Activated CD4-positive, alpha-beta memory T cell treated with anti-CD3 and anti-CD28 coated beads, Interleukin-2, amount 10 ng/mL, durations not matched to agents 7 days and 5 days (primary cell): ENCODE measurements at regions of chr22 and their contacts with region 1.

Region 1: DNA sequence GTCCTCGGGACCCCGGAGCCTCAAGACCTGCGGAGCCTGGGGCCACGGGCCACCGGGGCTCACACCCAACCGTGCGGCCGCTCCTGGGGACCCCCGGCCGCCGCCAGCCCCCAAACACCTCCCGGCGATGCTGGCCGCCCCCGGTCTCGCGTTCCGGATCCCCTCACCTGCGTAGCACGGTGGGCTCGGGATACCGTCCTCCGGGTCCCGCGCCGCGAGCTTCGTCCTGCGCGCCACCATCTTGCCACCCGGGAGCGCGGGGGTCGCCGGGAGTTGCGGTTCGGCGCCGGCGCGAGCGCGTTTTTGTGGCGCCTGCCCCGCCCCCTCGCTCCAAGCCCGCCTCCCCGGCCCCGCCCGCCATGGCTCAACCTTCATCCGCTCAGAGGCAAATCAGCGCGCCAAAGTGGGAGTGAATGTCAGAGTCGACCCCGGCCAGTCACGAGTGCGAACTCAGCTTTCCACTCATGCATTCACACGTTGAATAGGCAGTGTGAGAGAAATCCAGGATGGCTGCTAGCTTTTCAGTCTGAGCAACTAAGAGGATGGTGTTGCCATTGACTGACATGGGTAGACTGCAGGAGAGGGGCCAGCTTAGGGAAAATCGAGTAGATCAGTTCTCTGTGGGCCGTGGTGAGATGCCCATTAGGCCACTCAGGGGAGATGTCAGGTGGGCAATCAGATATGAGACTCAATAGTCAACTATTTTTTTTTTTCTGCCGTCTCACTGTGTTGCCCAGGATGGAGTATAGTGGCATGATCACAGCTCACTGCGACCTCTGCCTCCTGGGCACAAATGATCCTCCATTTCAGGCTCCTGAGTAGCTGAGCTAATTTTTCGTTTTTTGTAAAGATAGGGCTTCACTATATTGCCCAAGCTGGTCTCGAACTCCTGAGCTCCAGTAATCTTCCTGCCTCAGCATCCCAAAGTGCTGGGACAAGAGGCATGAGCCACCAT is 28.3 kb downstream of the SERHL2 start:
- DNase-seq: peak; percentile 88
- H3K4me3 Mint-ChIP-seq: peak overlapping the region; percentile 96
- H3K27ac Mint-ChIP-seq: peak overlapping the region; percentile 69
- H3K4me1 Mint-ChIP-seq: peaks cover 14% of the 10 kb centered on the region
- H3K27me3 Mint-ChIP-seq: no peaks in the 10 kb centered on the region

Region 2: DNA sequence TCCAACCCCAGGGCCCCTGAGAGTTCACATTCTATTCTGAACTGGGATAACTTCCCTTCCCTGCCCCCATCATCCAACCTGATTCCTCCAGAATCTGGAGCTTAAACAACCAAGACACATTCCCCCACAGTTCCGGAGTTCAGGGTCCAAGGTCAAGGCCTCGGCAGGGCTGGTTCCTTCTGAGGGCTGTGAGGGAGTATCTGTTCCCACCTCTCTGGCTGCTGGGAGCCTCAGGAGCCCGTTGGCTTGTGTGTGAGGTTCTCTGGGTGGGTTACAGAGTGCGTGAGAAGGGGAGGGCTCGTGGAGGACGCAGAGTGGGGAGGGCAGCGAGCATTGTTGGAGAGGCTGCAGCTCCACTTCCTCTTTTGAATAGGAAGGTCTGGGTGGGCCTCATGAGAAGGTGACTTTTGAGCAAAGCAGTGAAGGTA is 19.8 kb before region 1 on chr22:
- CTCF ChIA-PET with region 1: no interaction called
- POLR2A ChIA-PET with region 1: interaction called, 13 read pairs
- DNase-seq: no peak
- H3K4me3 Mint-ChIP-seq: no peak overlapping the region
- H3K27ac Mint-ChIP-seq: no peak overlapping the region
- H3K4me1 Mint-ChIP-seq: no peaks in the 10 kb centered on the region
- H3K27me3 Mint-ChIP-seq: no peaks in the 10 kb centered on the region

Region 3: DNA sequence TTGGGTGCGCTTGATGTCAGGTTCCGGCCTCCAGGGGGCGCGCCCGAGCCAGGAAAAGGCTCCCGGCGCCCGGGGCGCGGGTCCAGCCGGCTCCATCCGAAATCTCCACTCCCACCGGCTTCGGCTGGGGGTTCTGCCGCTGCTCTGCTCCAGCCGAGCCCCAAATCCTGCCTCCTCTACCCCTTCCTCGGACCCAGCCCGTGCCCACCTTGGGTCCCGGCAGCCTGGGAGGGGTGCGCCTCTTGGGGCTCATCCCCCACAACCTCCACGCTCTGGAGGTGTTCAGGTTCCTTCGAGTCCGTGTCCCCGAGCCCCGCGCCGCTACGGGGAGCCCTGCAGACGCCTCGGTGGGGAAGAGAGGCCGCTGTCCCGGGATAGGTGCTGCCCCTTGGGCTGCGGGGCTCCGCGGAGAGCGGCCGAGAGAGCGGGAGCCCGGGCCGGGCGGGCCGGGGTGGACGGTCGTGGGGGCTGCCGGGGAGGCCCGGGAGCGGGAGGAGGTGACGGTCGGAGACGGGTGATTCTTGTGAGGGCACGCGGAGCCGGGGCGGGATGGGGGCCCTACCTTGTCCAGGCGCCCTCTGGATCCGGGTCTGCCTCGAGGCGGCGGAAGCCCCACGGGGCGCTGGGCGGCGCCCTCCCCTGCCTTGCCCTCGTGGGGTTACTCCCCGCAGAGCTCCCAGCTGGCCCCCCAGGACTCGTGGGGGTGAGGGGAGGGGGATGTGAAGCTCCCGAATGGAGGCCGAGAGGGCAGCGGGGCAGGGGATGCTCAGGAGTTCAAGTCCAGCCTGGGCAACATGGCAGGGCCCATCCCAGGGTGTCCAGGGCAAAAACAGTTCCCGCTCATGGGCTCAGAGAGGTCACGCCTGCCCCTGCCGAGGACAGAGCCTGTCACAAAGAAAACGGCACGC is 80.3 kb after region 1 on chr22:
- CTCF ChIA-PET with region 1: no interaction called
- POLR2A ChIA-PET with region 1: no interaction called
- DNase-seq: peak; percentile 80
- H3K4me3 Mint-ChIP-seq: peak overlapping the region; percentile 58
- H3K27ac Mint-ChIP-seq: no peak overlapping the region
- H3K4me1 Mint-ChIP-seq: peaks cover 7% of the 10 kb centered on the region
- H3K27me3 Mint-ChIP-seq: peaks cover 9% of the 10 kb centered on the region